B cell (primary cell): ENCODE measurements at regions of chr7 and their contacts with region 1.

Region 1: DNA sequence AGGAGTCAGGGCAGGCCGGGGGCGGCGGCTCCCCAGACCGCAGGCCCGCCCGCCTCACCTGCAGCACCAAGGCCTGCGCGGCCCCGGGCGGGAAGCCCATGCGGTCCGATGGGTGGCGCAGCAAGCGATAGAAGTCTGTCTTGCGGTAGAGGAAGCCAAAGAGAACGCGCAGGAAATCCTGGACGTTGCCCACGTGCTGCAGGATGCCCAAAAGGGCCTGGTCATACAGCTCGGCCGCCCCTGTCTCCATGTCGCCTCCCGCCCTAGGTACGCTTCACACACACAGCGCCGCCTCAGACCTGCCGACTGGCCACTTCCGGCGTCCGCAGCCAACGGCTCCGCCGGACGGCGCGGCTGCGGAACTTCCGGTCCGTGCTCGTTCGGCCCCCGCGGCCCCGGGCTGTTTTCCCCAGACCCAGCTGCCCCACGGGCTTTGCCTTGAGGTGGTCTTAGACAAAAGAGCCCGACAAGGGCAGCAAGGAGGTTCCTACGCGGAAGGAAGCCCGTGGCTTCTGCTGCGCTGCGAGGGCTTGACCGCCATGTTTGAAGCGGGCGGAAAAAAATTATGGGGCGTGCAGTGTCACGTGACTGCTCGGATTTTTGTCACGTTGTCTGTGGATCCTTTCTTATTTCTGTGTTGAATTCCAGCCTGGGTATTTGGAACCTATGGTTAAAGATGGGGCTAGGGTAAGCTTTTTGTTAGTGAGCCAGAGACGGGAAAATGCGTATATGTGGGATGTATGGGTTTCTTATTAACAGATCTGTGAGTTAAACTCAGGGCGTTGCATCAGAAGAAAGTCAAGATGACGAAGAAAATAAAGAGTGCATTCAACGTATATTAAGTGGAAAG is at the start of gene NUDCD3:
- DNase-seq: peak; percentile 91
- ATAC-seq: peak; percentile 84
- H3K4me3 ChIP-seq: peak within 1 kb of the TSS; percentile 89 to 98 (median 93)
- H3K4me3 Mint-ChIP-seq: peak within 1 kb of the TSS; percentile 91
- H3K27ac ChIP-seq: peak within 1 kb of the TSS; percentile 93 to 94
- H3K27ac Mint-ChIP-seq: peak within 1 kb of the TSS; percentile 93
- H3K4me1 ChIP-seq: peaks cover 19 to 28% of the 10 kb centered on the region in 2 donors
- H3K4me1 Mint-ChIP-seq: peaks cover 44% of the 10 kb centered on the region
- H3K27me3 ChIP-seq: peaks cover 0 to 6% (median 3%) of the 10 kb centered on the region in 4 experiments
- H3K27me3 Mint-ChIP-seq: peaks cover 8% of the 10 kb centered on the region
- CTCF ChIP-seq: peak; percentile 27
- total RNA-seq, gene NUDCD3: 101 and 120 TPM in 2 replicates

Region 2: GRCh38 chr7:42911454-42912447 is 1578.8 kb before region 1 on chr7 and contains the start of gene C7orf25:
- CTCF ChIA-PET with region 1: interaction called, 3 read pairs
- POLR2A ChIA-PET with region 1: no interaction called
- intact Hi-C with region 1: loop called (anchors 2 kb)
- DNase-seq: peak; percentile 96
- ATAC-seq: peak; percentile 92
- H3K4me3 ChIP-seq: peak within 1 kb of the TSS; percentile 45 to 83 (median 74)
- H3K4me3 Mint-ChIP-seq: peak within 1 kb of the TSS; percentile 92
- H3K27ac ChIP-seq: peak within 1 kb of the TSS; percentile 40 to 72
- H3K27ac Mint-ChIP-seq: peak within 1 kb of the TSS; percentile 90
- H3K4me1 ChIP-seq: peaks cover 19 to 21% of the 10 kb centered on the region in 2 donors
- H3K4me1 Mint-ChIP-seq: peaks cover 49% of the 10 kb centered on the region
- H3K27me3 ChIP-seq: no peaks in the 10 kb centered on the region
- H3K27me3 Mint-ChIP-seq: no peaks in the 10 kb centered on the region
- CTCF ChIP-seq: no peak
- total RNA-seq, gene C7orf25: 7.5 and 11.8 TPM in 2 replicates

Region 3: DNA sequence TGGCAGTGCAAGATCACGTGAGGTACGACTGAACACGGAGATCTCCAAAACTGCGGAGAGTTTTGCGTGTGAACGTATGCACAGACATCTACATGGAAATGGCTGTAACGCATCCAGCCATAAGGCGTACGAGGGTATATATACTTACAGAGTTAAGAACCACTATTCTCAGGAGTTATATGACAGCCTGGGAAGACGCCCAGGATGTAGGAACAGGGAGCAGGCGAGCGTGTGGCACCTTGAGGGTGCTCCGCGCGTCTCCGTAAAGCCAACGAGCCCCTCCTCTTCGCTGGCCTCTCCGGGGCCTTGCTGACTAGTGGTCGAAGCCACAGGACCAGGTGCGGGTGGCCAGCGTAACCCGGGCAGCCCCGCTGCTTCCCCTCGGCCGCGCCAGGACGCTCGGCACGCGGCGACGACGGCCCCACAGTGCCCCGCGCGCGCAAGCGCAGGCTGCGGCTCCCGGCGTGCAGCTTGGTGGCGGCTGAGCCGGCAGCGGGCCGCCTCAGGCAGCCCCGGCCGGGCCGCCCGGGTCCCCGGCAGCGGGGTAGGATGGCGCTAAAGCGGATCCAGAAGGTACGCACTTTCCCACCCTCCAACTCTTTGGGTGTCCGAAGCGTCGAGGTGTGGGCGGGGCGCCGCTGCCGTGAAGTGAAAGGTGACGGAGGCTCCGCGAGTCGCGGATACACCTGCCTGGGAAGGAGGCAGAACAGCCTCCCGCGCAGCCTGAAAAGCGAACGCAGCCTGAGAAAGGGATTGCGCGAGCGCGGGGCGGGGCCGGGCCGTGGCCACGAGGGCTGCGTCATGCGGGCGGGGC is 564.4 kb before region 1 on chr7 and contains the start of gene UBE2D4:
- CTCF ChIA-PET with region 1: no interaction called
- POLR2A ChIA-PET with region 1: no interaction called
- intact Hi-C with region 1: loop called (anchors 1 kb)
- DNase-seq: peak; percentile 93
- ATAC-seq: peak; percentile 87
- H3K4me3 ChIP-seq: peak within 1 kb of the TSS; percentile 53 to 85 (median 72)
- H3K4me3 Mint-ChIP-seq: peak within 1 kb of the TSS; percentile 95
- H3K27ac ChIP-seq: peak within 1 kb of the TSS; percentile 87 to 94
- H3K27ac Mint-ChIP-seq: peak within 1 kb of the TSS; percentile 96
- H3K4me1 ChIP-seq: peaks cover 8 to 21% of the 10 kb centered on the region in 2 donors
- H3K4me1 Mint-ChIP-seq: peaks cover 18% of the 10 kb centered on the region
- H3K27me3 ChIP-seq: no peaks in the 10 kb centered on the region
- H3K27me3 Mint-ChIP-seq: no peaks in the 10 kb centered on the region
- CTCF ChIP-seq: no peak
- total RNA-seq, gene UBE2D4: 9.4 and 11.4 TPM in 2 replicates

Region 4: GRCh38 chr7:44082541-44083207 is 407.9 kb before region 1 on chr7:
- CTCF ChIA-PET with region 1: no interaction called
- POLR2A ChIA-PET with region 1: no interaction called
- intact Hi-C with region 1: loop called (anchors 1 kb)
- DNase-seq: no peak
- ATAC-seq: peak; percentile 91
- H3K4me3 ChIP-seq: peak overlapping the region; percentile 26 to 77 (median 66)
- H3K4me3 Mint-ChIP-seq: peak overlapping the region; percentile 84
- H3K27ac ChIP-seq: peak overlapping the region; percentile 77 to 92
- H3K27ac Mint-ChIP-seq: peak overlapping the region; percentile 93
- H3K4me1 ChIP-seq: peaks cover 38 to 43% of the 10 kb centered on the region in 2 donors
- H3K4me1 Mint-ChIP-seq: peaks cover 45% of the 10 kb centered on the region
- H3K27me3 ChIP-seq: no peaks in the 10 kb centered on the region
- H3K27me3 Mint-ChIP-seq: no peaks in the 10 kb centered on the region
- CTCF ChIP-seq: peak; percentile 34

Region 5: DNA sequence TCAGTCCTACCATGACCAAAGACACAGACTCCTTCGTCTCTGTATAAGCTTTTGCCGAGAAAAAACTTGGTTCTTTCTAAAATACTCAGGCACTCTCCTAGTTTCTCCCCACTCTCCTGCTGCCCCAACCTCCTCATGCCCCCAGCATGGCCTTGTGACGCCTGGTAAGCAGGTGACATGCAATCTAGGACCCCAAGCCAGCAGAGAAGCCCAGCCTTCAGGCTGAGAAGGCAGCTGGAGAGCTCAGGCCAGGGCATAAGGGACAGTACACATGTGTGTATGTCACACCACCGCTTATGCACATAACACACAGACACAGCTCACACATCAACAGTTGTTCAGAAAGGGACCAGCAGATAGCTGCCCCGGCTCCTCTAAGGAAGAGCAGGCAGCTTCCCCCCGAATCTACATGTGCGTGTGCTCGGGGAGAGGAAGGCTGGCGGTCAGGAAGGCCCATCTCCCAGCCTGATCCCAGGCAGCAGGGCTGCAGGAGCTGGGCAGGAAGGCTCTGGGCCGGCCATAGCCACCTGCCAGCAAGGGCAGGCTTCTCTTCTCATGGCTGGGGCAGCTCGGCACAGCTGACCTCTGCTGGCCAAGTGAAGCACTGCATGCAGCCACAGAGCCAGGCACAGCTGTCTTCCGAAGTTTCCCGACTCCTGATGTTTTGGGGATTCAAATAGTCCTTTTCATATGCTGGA is 74.7 kb after region 1 on chr7:
- CTCF ChIA-PET with region 1: interaction called, 14 read pairs
- POLR2A ChIA-PET with region 1: no interaction called
- intact Hi-C with region 1: loop called (anchors 2 kb)
- DNase-seq: peak; percentile 73
- ATAC-seq: peak; percentile 98
- H3K4me3 ChIP-seq: no peak overlapping the region
- H3K4me3 Mint-ChIP-seq: no peak overlapping the region
- H3K27ac ChIP-seq: no peak overlapping the region
- H3K27ac Mint-ChIP-seq: no peak overlapping the region
- H3K4me1 ChIP-seq: no peaks in the 10 kb centered on the region
- H3K4me1 Mint-ChIP-seq: no peaks in the 10 kb centered on the region
- H3K27me3 ChIP-seq: no peaks in the 10 kb centered on the region
- H3K27me3 Mint-ChIP-seq: no peaks in the 10 kb centered on the region
- CTCF ChIP-seq: peak; percentile 98

Region 6: GRCh38 chr7:44655341-44655740 is 164.8 kb after region 1 on chr7:
- CTCF ChIA-PET with region 1: no interaction called
- POLR2A ChIA-PET with region 1: no interaction called
- intact Hi-C with region 1: no loop called
- DNase-seq: no peak
- ATAC-seq: no peak
- H3K4me3 ChIP-seq: no peak overlapping the region
- H3K4me3 Mint-ChIP-seq: no peak overlapping the region
- H3K27ac ChIP-seq: no peak overlapping the region
- H3K27ac Mint-ChIP-seq: peak overlapping the region; percentile 26
- H3K4me1 ChIP-seq: no peaks in the 10 kb centered on the region
- H3K4me1 Mint-ChIP-seq: no peaks in the 10 kb centered on the region
- H3K27me3 ChIP-seq: no peaks in the 10 kb centered on the region
- H3K27me3 Mint-ChIP-seq: no peaks in the 10 kb centered on the region
- CTCF ChIP-seq: no peak

Region 7: GRCh38 chr7:45111298-45112223 is 621.0 kb after region 1 on chr7 and contains the start of gene TBRG4:
- CTCF ChIA-PET with region 1: no interaction called
- POLR2A ChIA-PET with region 1: no interaction called
- intact Hi-C with region 1: loop called (anchors 2 kb)
- DNase-seq: peak; percentile 96
- ATAC-seq: peak; percentile 94
- H3K4me3 ChIP-seq: peak within 1 kb of the TSS; percentile 67 to 93 (median 72)
- H3K4me3 Mint-ChIP-seq: peak within 1 kb of the TSS; percentile 91
- H3K27ac ChIP-seq: peak within 1 kb of the TSS; percentile 91 to 98
- H3K27ac Mint-ChIP-seq: peak within 1 kb of the TSS; percentile 95
- H3K4me1 ChIP-seq: peaks cover 22 to 38% of the 10 kb centered on the region in 2 donors
- H3K4me1 Mint-ChIP-seq: peaks cover 40% of the 10 kb centered on the region
- H3K27me3 ChIP-seq: no peaks in the 10 kb centered on the region
- H3K27me3 Mint-ChIP-seq: no peaks in the 10 kb centered on the region
- CTCF ChIP-seq: no peak
- total RNA-seq, gene TBRG4: 111 and 116 TPM in 2 replicates